ENCODE measurements at regions of chr21 and their contacts with region 1.

Region 1: GRCh38 chr21:45319461-45320211 is 31.9 kb upstream of the POFUT2 start:
- DNase-seq: peak in 2 of 4 donors; percentile 13 to 21
- ATAC-seq: peak; percentile 7
- H3K4me3 ChIP-seq: no peak overlapping the region
- H3K27ac ChIP-seq: peak overlapping the region; percentile 45 to 96 (median 58)
- H3K4me1 ChIP-seq: peaks cover 53% of the 10 kb centered on the region
- H3K27me3 ChIP-seq: no peaks in the 10 kb centered on the region
- CTCF ChIP-seq: no peak
- POLR2A ChIP-seq: no peak

Region 2: DNA sequence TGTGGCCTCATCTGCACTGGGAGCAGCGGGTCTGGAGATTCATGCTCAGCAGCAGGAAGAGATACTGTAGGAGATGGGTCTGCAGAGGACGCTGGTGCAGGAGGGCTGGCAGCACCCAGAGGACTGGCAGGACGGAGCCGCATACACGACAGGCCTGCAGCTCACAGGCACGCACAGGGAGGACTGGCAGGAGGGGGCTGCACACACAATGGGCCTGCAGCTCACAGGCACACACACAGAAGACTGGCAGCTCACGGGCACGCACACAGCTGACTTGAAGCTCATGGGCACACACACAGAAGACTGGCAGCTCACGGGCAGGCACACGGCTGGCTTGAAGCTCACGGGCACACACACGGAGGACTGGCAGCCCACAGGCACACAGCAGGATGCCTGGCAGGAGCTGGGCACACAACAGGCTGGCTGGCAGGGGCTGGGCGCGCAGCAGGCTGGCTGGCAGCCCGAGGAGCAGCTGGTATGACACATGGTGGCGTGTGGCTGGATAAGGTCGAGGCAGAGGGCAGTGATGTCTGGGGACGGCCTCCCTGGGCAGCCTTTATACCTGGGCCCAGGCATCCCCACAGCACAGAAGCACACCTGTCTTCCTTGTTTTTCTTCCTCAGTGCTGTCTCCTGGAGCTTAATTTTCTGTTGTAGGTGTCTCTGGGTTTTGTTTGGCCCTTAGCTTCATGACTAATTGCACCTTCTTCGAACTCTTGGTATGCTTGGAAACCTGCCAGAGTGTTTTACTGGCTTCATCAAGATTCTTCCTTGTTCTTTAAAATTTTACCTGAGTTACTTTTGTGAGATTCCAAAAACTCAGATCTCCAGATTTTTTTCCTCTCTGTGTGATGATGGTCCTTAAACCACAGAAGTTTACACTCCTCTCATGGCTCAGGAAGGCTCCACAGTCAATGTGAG is 653.0 kb before region 1 on chr21 and contains the start of gene KRTAP12-2:
- intact Hi-C with region 1: no loop called
- DNase-seq: no peak
- ATAC-seq: no peak
- H3K4me3 ChIP-seq: no peak within 1 kb of the TSS
- H3K27ac ChIP-seq: no peak within 1 kb of the TSS
- H3K4me1 ChIP-seq: no peaks in the 10 kb centered on the region
- H3K27me3 ChIP-seq: no peaks in the 10 kb centered on the region
- CTCF ChIP-seq: no peak
- POLR2A ChIP-seq: no peak
- total RNA-seq, gene KRTAP12-2: not detected

Region 3: GRCh38 chr21:45409466-45410150 is 90.0 kb after region 1 on chr21:
- intact Hi-C with region 1: loop called (anchors 10 kb)
- DNase-seq: peak; percentile 34 to 60 (median 53)
- ATAC-seq: peak; percentile 9
- H3K4me3 ChIP-seq: no peak overlapping the region
- H3K27ac ChIP-seq: peak overlapping the region in 3 of 4 donors; percentile 65 to 95 (median 94)
- H3K4me1 ChIP-seq: peaks cover 65% of the 10 kb centered on the region
- H3K27me3 ChIP-seq: no peaks in the 10 kb centered on the region
- CTCF ChIP-seq: no peak
- POLR2A ChIP-seq: no peak